Prostate gland (tissue), 2 donors: ENCODE measurements at regions of chr20 and their contacts with region 1.

Region 1: GRCh38 chr20:37534401-37535157 is 6.9 kb upstream of the BLCAP start:
- DNase-seq: peak; percentile 75
- H3K4me3 ChIP-seq: no peak overlapping the region
- H3K27ac ChIP-seq: no peak overlapping the region
- H3K4me1 ChIP-seq: no peaks in the 10 kb centered on the region
- H3K27me3 ChIP-seq: no peaks in the 10 kb centered on the region
- CTCF ChIP-seq: peak; percentile 75 to 94 (median 89)
- POLR2A ChIP-seq: no peak

Region 2: DNA sequence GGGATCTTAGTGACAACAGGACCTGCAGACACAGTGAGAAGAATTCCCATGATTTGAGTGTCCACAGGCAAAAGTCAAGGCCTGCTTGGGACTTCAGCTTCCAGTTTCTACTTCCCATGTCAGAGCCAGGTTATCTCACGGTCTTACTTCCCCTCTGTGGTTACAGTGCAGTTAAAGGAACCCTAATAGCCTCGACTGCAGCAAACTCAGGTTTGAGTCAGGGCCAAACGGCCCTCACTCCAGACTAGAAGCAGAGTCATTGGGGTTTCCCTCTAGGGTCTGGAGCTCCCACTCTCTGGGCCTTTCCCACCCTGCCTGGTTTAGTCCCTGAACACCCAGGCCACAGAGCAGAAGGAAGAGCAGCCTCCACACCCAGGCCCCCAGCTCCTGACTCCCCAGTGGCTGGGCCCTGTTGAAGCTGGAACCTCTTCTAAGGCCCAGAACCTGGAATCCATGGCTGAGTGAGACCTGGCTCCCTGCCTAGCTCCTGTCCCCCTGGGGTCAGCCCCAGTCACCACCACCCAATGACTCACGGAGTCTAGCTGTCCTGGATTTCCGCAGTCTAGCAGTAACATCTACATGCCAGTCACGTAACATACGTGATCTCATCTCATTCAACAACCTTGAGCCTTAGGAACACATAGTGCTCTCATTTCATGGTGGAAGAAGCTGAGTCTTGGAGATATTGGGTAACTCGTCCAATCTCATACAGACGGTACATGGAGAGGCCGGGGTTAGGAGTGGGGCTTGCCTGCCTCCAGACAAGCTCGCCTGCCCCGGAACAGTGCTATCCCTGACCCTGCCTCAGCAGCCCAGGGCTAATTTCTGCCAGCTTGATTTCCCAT is 263.8 kb before region 1 on chr20:
- intact Hi-C with region 1: loop called (anchors 2 kb)
- DNase-seq: no peak
- H3K4me3 ChIP-seq: no peak overlapping the region
- H3K27ac ChIP-seq: no peak overlapping the region
- H3K4me1 ChIP-seq: no peaks in the 10 kb centered on the region
- H3K27me3 ChIP-seq: no peaks in the 10 kb centered on the region
- CTCF ChIP-seq: no peak
- POLR2A ChIP-seq: no peak